Ascending aorta (tissue), 2 donors: ENCODE measurements at regions of chr3 and their contacts with region 1.

Region 1: GRCh38 chr3:184017672-184018423 is at the start of gene ABCC5:
- DNase-seq: peak; percentile 50 to 94
- H3K4me3 ChIP-seq: peak within 1 kb of the TSS; percentile 88 to 98
- H3K27ac ChIP-seq: peak within 1 kb of the TSS; percentile 58 to 60
- H3K4me1 ChIP-seq: peaks cover 0 to 4% of the 10 kb centered on the region in 2 donors
- H3K27me3 ChIP-seq: no peaks in the 10 kb centered on the region
- CTCF ChIP-seq: peak; percentile 4 to 50 (median 43)
- total RNA-seq, gene ABCC5: 16.2 TPM

Region 2: GRCh38 chr3:183099026-183099837 is 918.6 kb before region 1 on chr3 and contains the start of gene MCCC1:
- intact Hi-C with region 1: loop called (anchors 5 kb)
- DNase-seq: peak; percentile 96 to 99
- H3K4me3 ChIP-seq: peak within 1 kb of the TSS; percentile 65 to 83
- H3K27ac ChIP-seq: peak within 1 kb of the TSS; percentile 90 to 91
- H3K4me1 ChIP-seq: peaks cover 0 to 15% of the 10 kb centered on the region in 2 donors
- H3K27me3 ChIP-seq: no peaks in the 10 kb centered on the region
- CTCF ChIP-seq: no peak
- total RNA-seq, gene MCCC1: 10.3 TPM

Region 3: DNA sequence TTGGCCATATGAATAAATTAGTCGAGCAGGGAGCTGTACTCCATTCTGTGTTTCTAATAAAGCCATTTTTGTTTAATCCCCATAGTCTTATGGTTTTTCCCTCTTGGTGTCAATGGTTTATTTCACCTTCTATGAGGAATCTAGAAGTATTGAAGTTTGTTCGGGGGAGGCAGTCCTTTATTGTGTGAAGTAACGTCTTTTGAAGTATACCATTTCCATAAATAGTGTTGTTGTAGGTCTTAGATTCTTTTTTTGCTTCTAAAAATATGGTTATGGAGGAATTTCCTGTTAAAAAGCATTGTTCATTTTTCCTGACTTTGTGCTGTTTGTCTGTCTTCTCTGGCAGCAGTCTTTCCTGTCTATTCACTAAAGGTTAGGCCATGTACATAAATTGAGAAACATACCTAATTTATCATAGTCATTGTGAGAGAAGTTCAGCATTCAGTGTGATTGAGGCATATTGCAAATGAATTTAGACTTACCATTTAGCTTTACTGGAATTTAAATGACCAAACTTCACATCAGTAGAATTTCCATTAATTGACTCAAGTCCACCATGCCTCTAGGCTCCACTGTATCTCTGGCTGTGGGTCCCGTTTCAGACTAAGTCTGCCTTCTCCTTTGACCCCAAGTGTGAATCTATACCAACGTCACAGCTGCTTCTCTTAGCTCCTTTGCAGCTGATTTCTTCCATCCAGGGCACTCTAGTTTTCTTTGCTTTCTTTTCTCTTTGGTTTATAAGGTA is 282.9 kb before region 1 on chr3:
- intact Hi-C with region 1: no loop called
- DNase-seq: no peak
- H3K4me3 ChIP-seq: no peak overlapping the region
- H3K27ac ChIP-seq: no peak overlapping the region
- H3K4me1 ChIP-seq: no peaks in the 10 kb centered on the region
- H3K27me3 ChIP-seq: no peaks in the 10 kb centered on the region
- CTCF ChIP-seq: no peak

Region 4: GRCh38 chr3:183884427-183885296 is 133.2 kb before region 1 on chr3 and contains the start of gene PARL:
- intact Hi-C with region 1: loop called (anchors 5 kb)
- DNase-seq: peak; percentile 80 to 98
- H3K4me3 ChIP-seq: peak within 1 kb of the TSS; percentile 89 to 90
- H3K27ac ChIP-seq: peak within 1 kb of the TSS; percentile 75 to 81
- H3K4me1 ChIP-seq: peaks cover 0 to 21% of the 10 kb centered on the region in 2 donors
- H3K27me3 ChIP-seq: no peaks in the 10 kb centered on the region
- CTCF ChIP-seq: peak; percentile 89 to 92 (median 92)
- total RNA-seq, gene PARL: 14.3 TPM

Region 5: DNA sequence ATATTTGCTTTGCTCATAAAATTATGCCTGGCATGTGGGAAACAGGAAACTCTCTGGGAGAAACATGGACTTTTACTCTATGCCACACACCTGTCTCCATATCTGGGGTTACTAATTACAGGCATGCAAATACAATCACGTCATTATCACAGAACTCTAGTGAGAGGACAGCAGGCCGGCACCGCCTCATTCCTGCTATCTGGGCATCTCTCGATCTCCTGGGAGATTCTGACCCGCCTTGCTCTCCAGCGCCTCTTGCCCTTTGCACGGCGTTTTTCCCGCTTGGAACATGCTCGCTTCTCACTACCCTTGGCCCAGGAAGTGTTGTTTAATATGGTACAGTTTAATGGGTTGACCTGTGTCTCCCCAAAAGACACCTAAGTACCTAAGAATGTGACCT is 87.8 kb before region 1 on chr3:
- intact Hi-C with region 1: no loop called
- DNase-seq: no peak
- H3K4me3 ChIP-seq: no peak overlapping the region
- H3K27ac ChIP-seq: no peak overlapping the region
- H3K4me1 ChIP-seq: no peaks in the 10 kb centered on the region
- H3K27me3 ChIP-seq: no peaks in the 10 kb centered on the region
- CTCF ChIP-seq: no peak

Region 6: DNA sequence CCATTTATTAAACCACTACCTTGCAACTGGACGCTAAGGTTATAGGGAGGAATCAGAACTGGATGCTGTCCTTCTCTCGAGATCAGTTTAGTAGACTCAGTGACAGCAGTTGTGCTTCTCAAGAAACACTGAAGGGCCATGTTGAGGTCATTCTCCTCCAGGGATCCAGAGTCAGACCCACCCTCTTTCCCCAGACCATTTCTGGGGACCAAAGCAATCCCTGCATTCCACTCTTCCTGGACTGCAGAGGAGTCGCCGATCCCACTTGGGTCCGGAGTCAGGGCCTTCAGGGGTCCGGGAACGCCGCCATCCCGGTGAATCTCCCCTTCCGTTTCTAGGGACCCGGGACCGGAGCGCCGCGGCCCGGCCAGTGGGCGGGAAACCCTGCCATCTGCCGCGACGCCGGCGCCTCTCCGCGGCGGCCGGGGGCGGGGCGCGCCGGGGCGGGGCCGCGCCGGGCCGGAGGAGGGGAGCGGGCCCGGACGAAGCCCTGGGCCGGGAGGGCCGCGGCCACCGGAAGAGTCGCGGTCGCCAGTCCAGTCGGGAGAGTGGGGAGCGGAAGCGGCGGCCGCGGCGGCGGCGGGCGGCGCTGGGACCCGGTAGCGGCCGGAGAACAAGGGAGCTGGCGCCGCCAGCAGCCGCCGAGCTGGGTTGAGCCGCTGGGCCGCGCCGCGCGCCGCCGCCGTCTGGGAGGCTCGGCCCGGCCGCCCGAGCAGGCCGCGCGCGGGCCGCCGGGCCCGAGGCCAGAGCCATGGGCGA is 137.2 kb after region 1 on chr3 and contains the start of gene DVL3:
- intact Hi-C with region 1: loop called (anchors 5 kb)
- DNase-seq: peak in 1 of 2 donors; percentile 81
- H3K4me3 ChIP-seq: peak within 1 kb of the TSS; percentile 80 to 97
- H3K27ac ChIP-seq: peak within 1 kb of the TSS; percentile 87 to 89
- H3K4me1 ChIP-seq: peaks cover 9 to 21% of the 10 kb centered on the region in 2 donors
- H3K27me3 ChIP-seq: no peaks in the 10 kb centered on the region
- CTCF ChIP-seq: no peak
- total RNA-seq, gene DVL3: 36.6 TPM

Region 7: DNA sequence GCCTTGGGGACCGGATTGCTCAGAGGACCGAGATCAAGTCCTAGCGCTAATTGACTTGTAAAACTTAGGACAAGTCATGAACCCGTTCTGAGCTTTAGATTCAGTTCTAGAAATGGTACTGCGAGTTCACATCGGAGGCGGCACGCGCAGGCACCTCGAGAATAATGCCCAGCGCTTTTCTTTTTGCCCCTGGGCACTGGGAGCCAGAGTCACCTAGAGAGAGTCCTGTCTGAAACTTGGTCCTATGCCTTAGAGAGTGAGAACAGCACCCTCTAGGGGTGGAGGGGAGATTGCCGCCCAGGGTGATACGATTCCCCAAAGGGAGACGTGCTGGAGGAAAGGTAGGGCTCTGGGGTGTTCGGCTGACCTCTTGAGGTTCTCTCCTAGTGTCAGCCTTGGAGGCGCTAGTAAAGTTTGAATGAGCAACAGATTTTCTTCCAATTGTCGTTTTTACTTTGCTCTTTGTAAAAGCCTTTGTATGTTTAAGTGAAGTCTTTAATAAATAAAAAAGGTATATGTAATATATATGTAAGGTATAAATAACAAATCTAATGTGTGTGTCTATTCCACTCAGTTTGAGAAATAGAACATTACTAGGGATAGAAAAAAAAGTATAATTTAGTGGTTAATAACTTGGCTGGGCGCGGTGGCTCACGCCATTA is 232.4 kb after region 1 on chr3:
- intact Hi-C with region 1: loop called (anchors 5 kb)
- DNase-seq: peak; percentile 55 to 94
- H3K4me3 ChIP-seq: peak overlapping the region; percentile 70 to 86
- H3K27ac ChIP-seq: peak overlapping the region in 1 of 2 donors; percentile 45
- H3K4me1 ChIP-seq: peaks cover 0 to 14% of the 10 kb centered on the region in 2 donors
- H3K27me3 ChIP-seq: no peaks in the 10 kb centered on the region
- CTCF ChIP-seq: peak; percentile 78 to 90 (median 88)

Region 8: DNA sequence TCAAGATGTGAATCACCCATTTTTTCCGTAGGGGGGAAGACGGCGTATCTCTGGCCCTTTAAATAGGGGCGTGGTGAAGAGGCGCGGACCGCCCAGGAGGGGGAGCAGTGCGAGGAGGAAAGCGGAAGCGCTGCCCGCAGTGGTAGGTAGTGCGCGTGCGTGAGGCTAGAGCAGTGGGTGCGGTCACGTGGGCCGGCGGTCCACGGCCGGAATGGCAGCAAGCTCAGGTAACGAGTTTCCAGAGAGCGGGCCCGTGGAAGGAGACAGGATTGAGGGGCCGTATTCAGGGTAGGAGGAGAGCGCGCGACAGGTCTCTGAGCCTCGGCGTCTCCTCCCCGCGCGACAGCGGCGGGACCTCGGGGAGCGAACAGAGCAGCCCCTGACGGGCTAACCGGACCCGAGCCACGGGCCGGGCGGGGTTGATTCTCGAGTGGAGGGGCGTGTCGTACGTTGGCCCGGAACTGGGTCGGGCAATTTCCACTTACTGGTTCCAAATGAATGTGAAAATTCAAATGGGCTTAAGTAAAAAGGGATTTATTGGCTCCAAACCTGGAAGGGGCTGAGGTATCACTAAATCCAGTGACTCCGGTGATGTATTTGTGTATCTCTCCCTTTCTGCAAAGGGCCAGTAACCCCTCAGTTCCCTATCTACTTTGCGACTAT is 794.3 kb after region 1 on chr3 and contains the start of gene VPS8:
- intact Hi-C with region 1: loop called (anchors 10 kb)
- DNase-seq: peak; percentile 82 to 98
- H3K4me3 ChIP-seq: peak within 1 kb of the TSS; percentile 73 to 93
- H3K27ac ChIP-seq: peak within 1 kb of the TSS; percentile 56 to 79
- H3K4me1 ChIP-seq: peaks cover 0 to 6% of the 10 kb centered on the region in 2 donors
- H3K27me3 ChIP-seq: no peaks in the 10 kb centered on the region
- CTCF ChIP-seq: peak; percentile 33 to 61 (median 49)
- total RNA-seq, gene VPS8: 24.9 TPM